ENCODE measurements at regions of chr15 and their contacts with region 1.

Region 1: DNA sequence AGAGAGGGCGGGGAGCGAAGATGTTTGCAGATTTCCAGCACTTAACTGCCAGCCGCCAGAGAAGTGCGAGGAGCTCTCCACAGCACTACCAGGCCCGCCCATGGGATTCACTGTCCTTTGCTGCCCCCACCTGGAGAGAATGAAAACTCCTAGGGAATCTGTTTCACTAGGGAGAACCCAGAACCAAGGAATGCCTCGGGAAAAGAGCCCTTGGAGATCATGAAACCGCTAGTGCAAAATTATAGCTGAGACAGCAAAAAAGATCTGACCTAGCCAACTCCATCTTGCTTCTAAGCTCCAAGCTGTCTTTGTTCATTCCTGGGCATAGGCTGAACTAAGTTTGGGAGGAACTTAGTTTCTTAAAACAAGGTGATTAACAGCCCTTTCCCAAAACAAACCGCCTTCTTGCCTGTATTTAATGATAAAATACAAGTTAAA is 82.6 kb upstream of the GCNT3 start:
- DNase-seq: peak; percentile 33
- H3K4me3 ChIP-seq: no peak overlapping the region
- CTCF ChIP-seq: peak; percentile 78

Region 2: DNA sequence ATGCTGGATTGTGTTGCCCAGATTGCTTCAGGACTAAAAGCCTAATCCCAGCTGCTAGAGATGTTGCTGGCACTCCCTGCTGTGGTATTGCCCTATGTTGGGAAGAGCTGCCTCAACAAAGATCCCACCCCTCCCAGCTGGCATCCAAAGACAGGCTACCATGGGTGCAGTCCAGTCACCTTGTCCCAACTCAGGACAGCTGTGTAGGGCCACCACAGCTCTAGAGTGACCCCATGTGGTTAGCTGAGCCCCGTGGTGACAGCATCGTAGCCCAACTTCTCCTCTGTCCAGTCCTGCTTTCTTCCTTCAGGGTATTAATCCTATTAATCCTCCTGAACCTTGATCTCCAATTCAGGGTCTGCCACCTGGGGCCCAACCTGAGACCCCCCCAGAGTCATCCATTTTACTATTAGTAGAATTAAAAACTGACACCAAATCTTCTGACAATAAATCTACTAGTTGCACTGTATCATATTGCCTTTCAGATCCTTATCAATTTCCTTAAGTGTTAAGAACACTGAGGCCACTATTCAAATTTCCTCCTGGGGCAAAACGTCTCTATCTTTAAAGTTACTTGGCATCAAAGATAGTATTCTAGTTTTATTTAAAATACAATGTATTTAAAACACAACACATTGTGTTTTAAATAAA is 1307.3 kb before region 1 on chr15:
- CTCF ChIA-PET with region 1: interaction called, 13 read pairs
- POLR2A ChIA-PET with region 1: no interaction called
- DNase-seq: no peak
- H3K4me3 ChIP-seq: no peak overlapping the region
- CTCF ChIP-seq: peak; percentile 58

Region 3: DNA sequence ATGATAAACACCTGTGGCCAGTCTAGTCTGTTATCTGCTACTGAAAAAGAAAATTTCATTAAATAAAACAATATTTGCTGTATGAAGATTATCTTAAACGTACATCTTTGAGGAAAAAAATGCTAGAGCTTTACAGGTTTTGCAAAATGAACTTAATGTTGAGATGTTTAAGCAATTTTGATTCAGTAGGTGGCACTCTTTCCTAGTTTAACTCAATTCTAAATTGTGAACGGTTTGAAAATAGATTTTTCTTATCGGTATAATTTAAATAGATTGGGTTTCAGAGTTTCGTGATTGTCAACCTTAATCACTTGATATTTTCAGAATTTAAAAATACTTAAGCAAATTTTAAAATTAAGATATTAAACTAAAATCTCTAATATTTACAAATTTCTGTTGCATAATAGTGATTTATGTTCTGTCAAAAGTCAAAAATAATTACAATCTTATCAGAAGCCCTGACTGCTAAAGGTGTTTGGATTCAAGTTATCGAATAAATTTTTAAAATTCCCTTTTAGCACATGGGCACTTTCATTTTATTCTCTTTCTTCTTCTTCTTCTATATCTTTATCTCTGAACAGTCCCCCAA is 548.5 kb before region 1 on chr15:
- CTCF ChIA-PET with region 1: interaction called, 30 read pairs
- POLR2A ChIA-PET with region 1: no interaction called
- DNase-seq: no peak
- H3K4me3 ChIP-seq: no peak overlapping the region
- CTCF ChIP-seq: peak; percentile 21

Region 4: DNA sequence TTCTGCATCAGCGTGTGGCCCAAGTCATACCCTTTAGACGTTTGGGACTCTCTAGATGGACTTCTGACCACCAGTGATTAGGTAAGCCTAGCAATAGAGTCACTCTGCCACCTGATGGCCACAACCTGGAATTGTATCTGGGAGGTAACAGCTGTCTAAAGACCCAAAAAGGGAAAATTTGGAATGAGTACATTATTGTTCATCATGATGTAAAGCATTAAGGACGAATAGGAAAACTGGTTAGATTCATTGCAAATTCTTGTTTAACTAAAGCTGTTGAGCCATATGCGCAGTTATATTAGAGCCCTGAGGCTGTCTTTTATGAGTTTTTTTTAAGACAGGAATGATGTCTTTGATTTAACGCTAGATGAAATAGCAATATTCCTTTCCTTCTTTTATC is 27.4 kb before region 1 on chr15:
- CTCF ChIA-PET with region 1: interaction called, 15 read pairs
- POLR2A ChIA-PET with region 1: no interaction called
- DNase-seq: no peak
- H3K4me3 ChIP-seq: no peak overlapping the region
- CTCF ChIP-seq: peak; percentile 47

Region 5: DNA sequence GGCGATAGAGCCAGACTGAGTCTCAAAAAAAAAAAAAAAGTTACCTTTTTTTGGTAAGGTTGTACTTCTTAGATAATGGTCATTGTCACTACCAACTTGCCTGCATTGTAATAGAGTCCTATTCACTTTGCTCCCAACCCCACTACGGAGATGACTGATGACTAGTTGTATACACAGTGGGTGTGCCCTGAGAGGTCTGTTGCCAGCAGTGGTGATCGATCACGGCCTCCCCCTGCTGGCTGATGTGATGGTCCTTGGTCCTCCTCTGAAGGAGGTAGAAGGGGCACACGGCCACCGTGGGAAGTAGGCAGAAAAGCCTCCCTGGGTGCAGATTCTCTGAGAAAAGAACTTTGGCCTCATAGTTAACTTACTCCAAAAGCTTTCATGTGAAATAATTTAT is 93.3 kb after region 1 on chr15:
- CTCF ChIA-PET with region 1: interaction called, 14 read pairs
- POLR2A ChIA-PET with region 1: no interaction called
- DNase-seq: no peak
- H3K4me3 ChIP-seq: no peak overlapping the region
- CTCF ChIP-seq: peak; percentile 49